ENCODE measurements at regions of chr16 and their contacts with region 1.

Region 1: GRCh38 chr16:1363501-1364041 is 11.8 kb downstream of the GNPTG start:
- DNase-seq: peak; percentile 44
- H3K4me3 ChIP-seq: no peak overlapping the region
- H3K27ac ChIP-seq: no peak overlapping the region
- H3K4me1 ChIP-seq: no peaks in the 10 kb centered on the region
- H3K27me3 ChIP-seq: no peaks in the 10 kb centered on the region
- CTCF ChIP-seq: peak; percentile 77 to 85

Region 2: GRCh38 chr16:1330260-1330914 is 33.2 kb before region 1 on chr16:
- CTCF ChIA-PET with region 1: interaction called, 11 read pairs
- dilution Hi-C with region 1: no loop called
- in situ Hi-C with region 1: no loop called
- intact Hi-C with region 1: no loop called
- DNase-seq: no peak
- H3K4me3 ChIP-seq: no peak overlapping the region
- H3K27ac ChIP-seq: no peak overlapping the region
- H3K4me1 ChIP-seq: peaks cover 19% of the 10 kb centered on the region
- H3K27me3 ChIP-seq: peaks cover 25% of the 10 kb centered on the region
- CTCF ChIP-seq: peak; percentile 38 to 41

Region 3: DNA sequence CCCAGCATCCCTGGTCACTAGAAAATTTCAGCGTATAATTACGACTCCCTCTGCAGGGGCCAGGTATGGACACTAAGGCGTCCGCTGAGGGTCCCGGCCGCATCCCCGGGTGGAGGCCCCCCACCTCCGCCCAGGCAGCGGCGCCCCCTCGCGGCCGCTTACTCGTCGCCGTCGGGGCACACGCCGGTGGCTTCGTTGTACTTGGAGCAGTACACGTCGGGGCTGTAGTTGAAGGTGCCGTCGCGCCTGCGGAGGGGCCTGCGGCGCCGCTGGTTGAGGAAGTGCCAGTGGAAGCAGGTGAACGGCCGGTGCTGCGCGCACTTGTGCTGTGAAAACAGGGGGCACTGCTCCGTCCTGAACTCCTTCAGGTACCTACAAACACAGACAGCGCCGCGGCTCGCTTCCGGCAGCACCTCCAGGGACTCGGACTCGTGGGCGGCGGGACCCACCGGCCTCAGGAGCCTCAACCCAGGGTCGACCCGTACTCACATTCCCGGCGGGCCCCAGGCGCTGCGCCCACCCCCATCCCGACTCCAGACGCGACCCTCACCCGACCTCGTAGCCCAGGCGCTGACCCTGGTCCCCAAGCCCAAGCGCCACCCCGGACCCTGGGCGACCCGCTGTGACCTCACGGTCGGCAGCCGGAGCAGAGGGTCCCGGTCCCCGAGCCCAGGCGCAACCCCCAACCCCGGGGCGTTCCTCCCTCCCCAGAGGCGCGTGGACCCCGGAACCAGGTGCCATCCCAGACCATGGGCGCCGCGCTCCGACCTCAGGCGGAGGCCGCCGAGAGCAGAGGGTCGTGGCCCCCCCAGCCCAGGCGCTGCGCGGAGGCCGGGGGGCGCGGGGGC is 50.3 kb after region 1 on chr16:
- CTCF ChIA-PET with region 1: no interaction called
- dilution Hi-C with region 1: no loop called
- in situ Hi-C with region 1: no loop called
- intact Hi-C with region 1: loop called (anchors 1 kb)
- DNase-seq: peak; percentile 23
- H3K4me3 ChIP-seq: peak overlapping the region; percentile 68 to 92 (median 86)
- H3K27ac ChIP-seq: peak overlapping the region; percentile 44
- H3K4me1 ChIP-seq: peaks cover 4% of the 10 kb centered on the region
- H3K27me3 ChIP-seq: no peaks in the 10 kb centered on the region
- CTCF ChIP-seq: peak; percentile 11 to 66

Region 4: GRCh38 chr16:1772736-1773584 is 409.4 kb after region 1 on chr16 and contains the starts of genes EME2 and MRPS34:
- CTCF ChIA-PET with region 1: no interaction called
- dilution Hi-C with region 1: no loop called
- in situ Hi-C with region 1: no loop called
- intact Hi-C with region 1: no loop called
- DNase-seq: peak; percentile 83
- H3K4me3 ChIP-seq: peak within 1 kb of the TSS; percentile 69 to 82 (median 70)
- H3K27ac ChIP-seq: peak within 1 kb of the TSS; percentile 3
- H3K4me1 ChIP-seq: peaks cover 31% of the 10 kb centered on the region
- H3K27me3 ChIP-seq: no peaks in the 10 kb centered on the region
- CTCF ChIP-seq: peak; percentile 45 to 77
- total RNA-seq, gene EME2: 17.2 to 29.0 TPM
- total RNA-seq, gene MRPS34: 34.7 to 99.4 TPM